WTC11 (cell line): ENCODE measurements at regions of chr18 and their contacts with region 1.

Region 1: DNA sequence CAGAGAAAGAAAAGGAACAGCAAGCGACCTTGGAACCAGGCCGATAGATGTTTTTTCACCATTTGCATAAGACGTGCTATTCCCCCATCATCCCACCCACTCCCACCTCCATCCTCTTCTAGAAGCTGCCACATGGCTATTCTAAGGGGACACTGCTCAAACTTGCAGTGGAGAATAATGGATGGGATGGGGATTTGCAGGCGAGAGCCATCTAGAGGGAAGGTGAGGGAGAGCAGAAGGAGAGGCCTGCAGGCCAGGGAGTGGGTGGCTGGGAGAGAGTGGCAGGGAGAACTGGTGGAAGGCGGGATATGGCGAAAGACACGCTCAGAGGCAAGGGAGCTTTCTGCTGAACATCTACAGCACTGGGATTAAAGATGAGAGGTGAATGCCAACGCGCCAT is 84.9 kb downstream of the MAPK4 start:
- DNase-seq: peak; percentile 60
- ATAC-seq: peak; percentile 99
- H3K4me3 Mint-ChIP-seq: no peak overlapping the region
- H3K27ac Mint-ChIP-seq: peak overlapping the region; percentile 4; the same call in 1 of the 2 replicates
- H3K4me1 Mint-ChIP-seq: peaks cover 11% of the 10 kb centered on the region
- H3K27me3 Mint-ChIP-seq: no peaks in the 10 kb centered on the region
- CTCF ChIP-seq: no peak

Region 2: GRCh38 chr18:50441518-50441917 is 203.3 kb before region 1 on chr18:
- CTCF ChIA-PET with region 1: no interaction called
- POLR2A ChIA-PET with region 1: no interaction called
- DNase-seq: no peak
- ATAC-seq: no peak
- H3K4me3 Mint-ChIP-seq: no peak overlapping the region
- H3K27ac Mint-ChIP-seq: no peak overlapping the region
- H3K4me1 Mint-ChIP-seq: peaks cover 21% of the 10 kb centered on the region
- H3K27me3 Mint-ChIP-seq: peaks cover 9% of the 10 kb centered on the region; the same call in 1 of the 2 replicates
- CTCF ChIP-seq: no peak

Region 3: DNA sequence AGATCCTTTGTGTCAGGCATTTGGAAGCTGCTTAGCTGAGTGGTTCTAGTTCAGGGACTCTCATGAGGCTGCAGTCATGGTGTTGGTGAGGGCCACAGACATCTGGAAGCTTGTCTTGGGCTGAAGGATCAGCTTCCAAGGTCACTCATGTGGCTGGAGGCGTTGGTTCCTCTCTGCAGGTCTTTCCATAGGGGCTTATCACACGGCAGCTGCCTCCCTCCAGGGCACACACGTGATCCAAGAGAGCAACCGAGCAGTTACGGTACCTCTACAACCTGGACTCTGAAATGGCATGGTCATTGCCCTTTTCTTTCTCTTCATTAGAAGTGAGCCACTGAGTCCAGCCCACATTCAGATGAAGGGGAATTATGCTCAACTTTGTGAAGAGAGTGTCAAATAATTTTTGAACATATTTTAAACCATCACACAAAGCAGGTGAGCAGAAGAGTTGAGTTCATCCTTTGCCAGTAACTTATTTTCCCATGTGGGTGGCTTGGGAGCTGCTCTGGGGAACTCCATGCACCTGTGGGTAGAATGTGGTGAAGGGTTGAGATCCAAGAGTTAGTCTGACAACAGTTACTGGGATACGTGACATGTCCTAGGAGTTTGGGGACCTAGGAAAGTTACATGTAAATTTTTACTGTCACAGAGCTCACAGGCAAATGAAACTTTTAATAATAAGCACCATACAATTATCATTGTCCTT is 63.4 kb before region 1 on chr18:
- CTCF ChIA-PET with region 1: no interaction called
- POLR2A ChIA-PET with region 1: no interaction called
- DNase-seq: no peak
- ATAC-seq: no peak
- H3K4me3 Mint-ChIP-seq: no peak overlapping the region
- H3K27ac Mint-ChIP-seq: no peak overlapping the region
- H3K4me1 Mint-ChIP-seq: peaks cover 14% of the 10 kb centered on the region
- H3K27me3 Mint-ChIP-seq: peaks cover 28% of the 10 kb centered on the region
- CTCF ChIP-seq: no peak

Region 4: GRCh38 chr18:50610349-50610748 is 34.5 kb before region 1 on chr18:
- CTCF ChIA-PET with region 1: interaction called, 14 read pairs
- POLR2A ChIA-PET with region 1: no interaction called
- DNase-seq: peak; percentile 26
- ATAC-seq: no peak
- H3K4me3 Mint-ChIP-seq: no peak overlapping the region
- H3K27ac Mint-ChIP-seq: no peak overlapping the region
- H3K4me1 Mint-ChIP-seq: no peaks in the 10 kb centered on the region
- H3K27me3 Mint-ChIP-seq: no peaks in the 10 kb centered on the region
- CTCF ChIP-seq: no peak; the same call in 1 of the 2 replicates

Region 5: GRCh38 chr18:50631831-50632285 is 13.0 kb before region 1 on chr18:
- CTCF ChIA-PET with region 1: no interaction called
- POLR2A ChIA-PET with region 1: no interaction called
- DNase-seq: no peak
- ATAC-seq: no peak
- H3K4me3 Mint-ChIP-seq: no peak overlapping the region
- H3K27ac Mint-ChIP-seq: no peak overlapping the region
- H3K4me1 Mint-ChIP-seq: peaks cover 22% of the 10 kb centered on the region
- H3K27me3 Mint-ChIP-seq: no peaks in the 10 kb centered on the region
- CTCF ChIP-seq: no peak